Esophagus squamous epithelium (tissue), 5 donors: ENCODE measurements at regions of chr10 and their contacts with region 1.

Region 1: GRCh38 chr10:60454336-60454735 is 64.7 kb upstream of the ANK3 start:
- DNase-seq: no peak
- H3K4me3 ChIP-seq: no peak overlapping the region
- H3K27ac ChIP-seq: no peak overlapping the region
- H3K4me1 ChIP-seq: no peaks in the 10 kb centered on the region
- H3K27me3 ChIP-seq: no peaks in the 10 kb centered on the region
- CTCF ChIP-seq: no peak
- POLR2A ChIP-seq: no peak

Region 2: DNA sequence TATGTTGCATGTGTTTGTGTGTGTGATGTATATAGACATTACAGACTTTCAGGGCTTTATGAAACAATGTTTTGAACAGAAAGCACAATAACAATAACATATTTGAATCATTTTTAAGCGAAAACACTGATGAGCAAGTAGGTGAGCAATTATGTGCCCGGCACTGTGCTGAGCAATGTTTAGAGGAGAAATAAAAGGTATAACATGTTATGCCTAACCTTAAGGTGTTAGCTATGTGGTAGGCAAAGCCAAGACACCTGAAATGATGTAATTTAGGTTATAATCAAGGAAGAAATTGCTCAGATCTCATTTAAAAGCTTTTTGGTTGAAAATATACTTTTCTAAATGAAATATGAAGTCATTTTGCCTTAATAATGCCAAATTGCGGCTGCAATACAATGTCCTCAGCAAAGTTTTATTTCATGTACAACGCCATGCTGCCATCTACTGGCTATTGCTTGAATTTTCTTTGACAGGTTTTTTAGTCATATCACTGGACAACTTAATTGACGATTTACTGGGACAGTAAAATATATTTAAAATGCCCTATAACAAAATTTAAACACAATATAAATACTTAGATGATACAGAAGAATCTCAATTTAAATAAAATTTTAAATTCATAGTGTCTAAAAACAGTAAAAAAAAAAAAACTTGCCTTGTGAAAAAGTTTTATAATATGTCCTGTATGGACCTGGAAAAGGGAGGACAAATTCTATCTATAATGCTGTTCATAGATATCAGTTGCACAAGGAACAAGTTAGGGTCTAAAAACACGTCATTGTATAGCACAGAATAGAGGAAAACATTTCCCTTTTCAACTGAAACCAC is 192.8 kb after region 1 on chr10:
- intact Hi-C with region 1: loop called (anchors 5 kb)
- DNase-seq: no peak
- H3K4me3 ChIP-seq: no peak overlapping the region
- H3K27ac ChIP-seq: no peak overlapping the region
- H3K4me1 ChIP-seq: peaks cover 0 to 14% (median 0%) of the 10 kb centered on the region in 3 donors
- H3K27me3 ChIP-seq: no peaks in the 10 kb centered on the region
- CTCF ChIP-seq: peak; percentile 40 to 80 (median 74)
- POLR2A ChIP-seq: no peak